K562 (cell line): ENCODE measurements at regions of chr20 and their contacts with region 1.

Region 1: DNA sequence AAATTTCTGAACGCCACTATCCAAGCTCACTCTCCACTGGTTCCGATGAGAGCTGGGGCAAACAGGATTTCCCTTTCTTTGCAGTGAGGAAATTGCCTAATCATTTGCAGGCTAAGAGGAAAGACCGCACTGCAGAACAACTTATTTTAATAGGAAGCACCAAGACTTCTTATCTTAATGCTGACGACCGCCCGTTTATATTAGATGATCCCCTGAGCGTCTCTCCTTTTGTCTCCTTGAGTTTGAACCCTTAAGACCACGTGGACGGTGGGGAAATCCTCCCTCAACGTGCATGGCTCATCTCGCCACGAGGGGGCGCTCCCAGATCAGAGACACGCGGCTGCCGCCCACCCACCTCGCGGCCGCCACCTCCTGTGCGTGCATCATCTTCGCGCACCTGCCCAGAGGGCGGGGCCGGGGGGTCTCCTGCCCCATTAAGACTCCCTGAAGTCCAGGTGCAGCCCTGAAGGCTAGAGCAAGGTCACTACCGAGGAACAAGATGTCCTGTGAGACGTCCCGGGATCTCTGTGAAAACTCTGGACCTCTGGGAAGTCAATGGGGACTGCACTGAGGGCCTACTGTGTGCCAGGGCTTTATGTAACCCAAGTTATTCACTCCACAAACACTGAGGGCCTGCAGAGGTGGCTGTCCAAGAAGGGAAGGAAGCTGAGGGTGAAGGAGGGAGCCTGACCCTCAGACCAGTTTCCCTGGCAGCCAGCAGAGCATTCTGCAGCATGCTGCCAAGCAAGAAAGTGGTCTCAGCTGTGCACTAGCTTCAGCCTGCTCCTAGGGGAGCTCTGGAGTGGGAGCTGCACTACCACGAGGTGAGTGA is 28.1 kb downstream of the PDYN start:
- DNase-seq: peak; percentile 69 to 80 (median 78)
- ATAC-seq: peak; percentile 92
- H3K4me3 ChIP-seq: no peak overlapping the region
- H3K27ac ChIP-seq: no peak overlapping the region
- H3K4me1 ChIP-seq: peaks cover 0 to 3% of the 10 kb centered on the region in 2 experiments; a peak in 1 of 5 replicates
- H3K27me3 ChIP-seq: no peaks in the 10 kb centered on the region; a peak in 2 of 5 replicates
- CTCF ChIP-seq: peak; percentile 78 to 92 (median 80)
- EP300 ChIP-seq: no peak
- POLR2A ChIP-seq: no peak
- RAD21 ChIP-seq: peak; percentile 61 to 84

Region 2: GRCh38 chr20:2172305-2173175 is 206.8 kb after region 1 on chr20:
- CTCF ChIA-PET with region 1: interaction called, 6 read pairs
- POLR2A ChIA-PET with region 1: no interaction called
- in situ Hi-C with region 1: loop called (anchors 5 kb)
- intact Hi-C with region 1: loop called (anchors 1 kb)
- DNase-seq: peak; percentile 61 to 72 (median 66)
- ATAC-seq: peak; percentile 83
- H3K4me3 ChIP-seq: no peak overlapping the region
- H3K27ac ChIP-seq: no peak overlapping the region
- H3K4me1 ChIP-seq: no peaks in the 10 kb centered on the region
- H3K27me3 ChIP-seq: peaks cover 0 to 12% of the 10 kb centered on the region in 2 experiments; a peak in 3 of 5 replicates
- CTCF ChIP-seq: peak; percentile 79 to 83 (median 81)
- EP300 ChIP-seq: no peak
- POLR2A ChIP-seq: no peak
- RAD21 ChIP-seq: peak; percentile 69 to 89